ENCODE measurements at regions of chr18 and their contacts with region 1.

Region 1: DNA sequence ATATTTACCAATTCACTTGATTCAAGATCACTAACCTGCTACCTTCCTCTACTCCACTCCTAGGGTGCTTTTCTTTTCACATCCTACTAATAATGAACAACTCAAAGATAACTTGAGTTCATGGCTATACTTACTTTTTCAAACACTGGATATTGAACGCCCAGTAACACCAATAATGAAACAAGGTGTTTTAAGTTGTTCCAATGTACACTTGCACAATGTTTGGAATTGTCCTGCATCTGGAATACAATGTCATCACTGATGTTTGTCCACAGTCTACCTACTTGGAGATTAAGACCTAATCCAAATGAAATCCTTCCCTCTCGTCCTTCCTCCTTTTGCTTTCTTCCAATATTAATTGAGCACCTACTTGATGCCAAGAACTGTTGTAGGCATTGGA is 218.3 kb upstream of the TMEM200C start:
- DNase-seq: no peak
- H3K4me3 Mint-ChIP-seq: no peak overlapping the region
- H3K27ac Mint-ChIP-seq: no peak overlapping the region
- H3K4me1 Mint-ChIP-seq: no peaks in the 10 kb centered on the region
- H3K27me3 Mint-ChIP-seq: no peaks in the 10 kb centered on the region
- CTCF ChIP-seq: no peak

Region 2: GRCh38 chr18:6096730-6097129 is 16.9 kb before region 1 on chr18:
- CTCF ChIA-PET with region 1: no interaction called
- intact Hi-C with region 1: loop called (anchors 1 kb)
- DNase-seq: no peak
- H3K4me3 Mint-ChIP-seq: no peak overlapping the region
- H3K27ac Mint-ChIP-seq: no peak overlapping the region
- H3K4me1 Mint-ChIP-seq: no peaks in the 10 kb centered on the region
- H3K27me3 Mint-ChIP-seq: peaks cover 14% of the 10 kb centered on the region
- CTCF ChIP-seq: no peak

Measured in Calu3 (cell line).